Lower leg skin (tissue), 4 donors: ENCODE measurements at regions of chr5 and their contacts with region 1.

Region 1: GRCh38 chr5:177500685-177501522 is 3.5 kb upstream of the PDLIM7 start:
- DNase-seq: peak; percentile 83 to 97
- H3K4me3 ChIP-seq: no peak overlapping the region
- CTCF ChIP-seq: peak in 2 of 3 donors; percentile 26 to 74
- POLR2A ChIP-seq: no peak

Region 2: DNA sequence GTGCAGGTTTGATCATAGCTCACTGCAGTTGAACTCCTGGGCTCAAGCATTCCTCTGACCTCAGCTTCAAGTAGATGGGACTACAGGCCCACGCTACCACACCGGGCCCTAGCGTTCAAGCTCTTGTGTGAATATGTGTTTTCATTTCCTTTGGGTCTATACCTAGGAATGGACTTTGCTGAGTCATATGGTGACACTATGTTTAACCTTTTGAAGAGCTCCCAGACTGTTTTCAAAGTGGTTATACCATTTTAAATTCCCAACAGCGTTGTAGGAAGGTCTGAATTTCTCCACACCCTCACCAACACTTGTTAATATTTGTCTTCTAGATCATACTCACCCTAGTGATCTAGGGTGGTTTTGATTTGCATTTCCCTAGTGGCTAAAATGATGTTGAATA is 1019.2 kb before region 1 on chr5:
- intact Hi-C with region 1: no loop called
- DNase-seq: no peak
- H3K4me3 ChIP-seq: no peak overlapping the region
- CTCF ChIP-seq: no peak
- POLR2A ChIP-seq: no peak

Region 3: GRCh38 chr5:176578391-176578808 is 922.5 kb before region 1 on chr5:
- intact Hi-C with region 1: no loop called
- DNase-seq: no peak
- H3K4me3 ChIP-seq: no peak overlapping the region
- CTCF ChIP-seq: no peak
- POLR2A ChIP-seq: no peak

Region 4: DNA sequence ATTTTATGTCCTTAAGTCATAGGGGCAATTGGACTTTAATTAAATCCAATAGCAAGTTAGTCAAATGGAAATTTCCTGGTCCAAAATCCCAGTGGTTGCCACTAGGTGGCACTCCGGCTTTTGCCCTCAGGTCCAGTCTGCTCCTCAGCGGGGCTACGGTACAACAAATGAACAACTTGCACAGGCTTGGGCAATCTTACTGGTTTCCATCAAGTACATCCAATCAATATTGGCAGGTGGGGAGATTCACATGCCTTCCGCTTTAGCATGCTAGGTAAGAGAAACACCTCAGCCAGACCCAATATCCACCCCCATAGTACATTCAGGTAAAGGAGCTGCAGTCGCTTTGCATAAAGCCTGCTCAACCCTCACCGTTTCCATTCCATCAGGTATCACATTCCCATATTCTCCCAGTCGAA is 182.9 kb before region 1 on chr5:
- intact Hi-C with region 1: no loop called
- DNase-seq: peak; percentile 71 to 94
- H3K4me3 ChIP-seq: no peak overlapping the region
- CTCF ChIP-seq: peak in 1 of 3 donors; percentile 41
- POLR2A ChIP-seq: no peak

Region 5: GRCh38 chr5:177403792-177404640 is 96.9 kb before region 1 on chr5:
- intact Hi-C with region 1: loop called (anchors 5 kb)
- DNase-seq: peak; percentile 75 to 96
- H3K4me3 ChIP-seq: peak overlapping the region; percentile 39
- CTCF ChIP-seq: peak in 1 of 3 donors; percentile 65
- POLR2A ChIP-seq: no peak

Region 6: GRCh38 chr5:177554474-177555111 is 53.7 kb after region 1 on chr5 and contains the start of gene FAM193B:
- intact Hi-C with region 1: no loop called
- DNase-seq: peak; percentile 90 to 99
- H3K4me3 ChIP-seq: peak within 1 kb of the TSS; percentile 73
- CTCF ChIP-seq: no peak
- POLR2A ChIP-seq: no peak
- total RNA-seq, gene FAM193B: 57.0 to 128 (median 69.7) TPM